Activated naive CD4-positive, alpha-beta T cell treated with anti-CD3 and anti-CD28 coated beads for 36 hours (primary cell): ENCODE measurements at regions of chr1 and their contacts with region 1.

Region 1: GRCh38 chr1:42282024-42282579 is 52.9 kb downstream of the FOXJ3 start:
- DNase-seq: no peak
- H3K4me3 Mint-ChIP-seq: no peak overlapping the region
- H3K27ac Mint-ChIP-seq: no peak overlapping the region
- H3K4me1 Mint-ChIP-seq: peaks cover 57% of the 10 kb centered on the region
- H3K27me3 Mint-ChIP-seq: no peaks in the 10 kb centered on the region

Region 2: GRCh38 chr1:42195841-42196240 is 86.3 kb before region 1 on chr1:
- CTCF ChIA-PET with region 1: no interaction called
- intact Hi-C with region 1: no loop called
- DNase-seq: no peak
- H3K4me3 Mint-ChIP-seq: no peak overlapping the region
- H3K27ac Mint-ChIP-seq: no peak overlapping the region
- H3K4me1 Mint-ChIP-seq: no peaks in the 10 kb centered on the region
- H3K27me3 Mint-ChIP-seq: no peaks in the 10 kb centered on the region

Region 3: GRCh38 chr1:42311138-42311537 is 29.0 kb after region 1 on chr1:
- CTCF ChIA-PET with region 1: no interaction called
- intact Hi-C with region 1: loop called (anchors 1 kb)
- DNase-seq: no peak
- H3K4me3 Mint-ChIP-seq: no peak overlapping the region
- H3K27ac Mint-ChIP-seq: peak overlapping the region; percentile 11
- H3K4me1 Mint-ChIP-seq: peaks cover 60% of the 10 kb centered on the region
- H3K27me3 Mint-ChIP-seq: no peaks in the 10 kb centered on the region

Region 4: GRCh38 chr1:42335050-42335808 is 53.1 kb after region 1 on chr1 and contains the start of gene FOXJ3:
- CTCF ChIA-PET with region 1: no interaction called
- intact Hi-C with region 1: loop called (anchors 1 kb)
- DNase-seq: peak; percentile 93
- H3K4me3 Mint-ChIP-seq: peak within 1 kb of the TSS; percentile 92
- H3K27ac Mint-ChIP-seq: peak within 1 kb of the TSS; percentile 88
- H3K4me1 Mint-ChIP-seq: peaks cover 39% of the 10 kb centered on the region
- H3K27me3 Mint-ChIP-seq: no peaks in the 10 kb centered on the region
- total RNA-seq, gene FOXJ3: 35.6 to 37.2 TPM